H1 (cell line): ENCODE measurements at regions of chr6 and their contacts with region 1.

Region 1: GRCh38 chr6:152897799-152898399 is 84.9 kb downstream of the FBXO5 start:
- DNase-seq: peak; percentile 58 to 98
- H3K4me3 ChIP-seq: no peak overlapping the region
- H3K27ac ChIP-seq: no peak overlapping the region
- H3K4me1 ChIP-seq: no peaks in the 10 kb centered on the region; a peak in 1 of 7 replicates
- H3K27me3 ChIP-seq: peaks cover 0 to 3% (median 0%) of the 10 kb centered on the region in 4 experiments; a peak in 3 of 7 replicates
- CTCF ChIP-seq: peak; percentile 78 to 98 (median 96)
- EP300 ChIP-seq: no peak
- POLR2A ChIP-seq: no peak
- RAD21 ChIP-seq: peak; percentile 42 to 66

Region 2: GRCh38 chr6:152576525-152576924 is 321.4 kb before region 1 on chr6:
- CTCF ChIA-PET with region 1: no interaction called
- POLR2A ChIA-PET with region 1: no interaction called
- DNase-seq: no peak
- H3K4me3 ChIP-seq: no peak overlapping the region
- H3K27ac ChIP-seq: no peak overlapping the region
- H3K4me1 ChIP-seq: no peaks in the 10 kb centered on the region; a peak in 1 of 7 replicates
- H3K27me3 ChIP-seq: no peaks in the 10 kb centered on the region
- CTCF ChIP-seq: no peak
- EP300 ChIP-seq: no peak
- POLR2A ChIP-seq: no peak
- RAD21 ChIP-seq: no peak

Region 3: DNA sequence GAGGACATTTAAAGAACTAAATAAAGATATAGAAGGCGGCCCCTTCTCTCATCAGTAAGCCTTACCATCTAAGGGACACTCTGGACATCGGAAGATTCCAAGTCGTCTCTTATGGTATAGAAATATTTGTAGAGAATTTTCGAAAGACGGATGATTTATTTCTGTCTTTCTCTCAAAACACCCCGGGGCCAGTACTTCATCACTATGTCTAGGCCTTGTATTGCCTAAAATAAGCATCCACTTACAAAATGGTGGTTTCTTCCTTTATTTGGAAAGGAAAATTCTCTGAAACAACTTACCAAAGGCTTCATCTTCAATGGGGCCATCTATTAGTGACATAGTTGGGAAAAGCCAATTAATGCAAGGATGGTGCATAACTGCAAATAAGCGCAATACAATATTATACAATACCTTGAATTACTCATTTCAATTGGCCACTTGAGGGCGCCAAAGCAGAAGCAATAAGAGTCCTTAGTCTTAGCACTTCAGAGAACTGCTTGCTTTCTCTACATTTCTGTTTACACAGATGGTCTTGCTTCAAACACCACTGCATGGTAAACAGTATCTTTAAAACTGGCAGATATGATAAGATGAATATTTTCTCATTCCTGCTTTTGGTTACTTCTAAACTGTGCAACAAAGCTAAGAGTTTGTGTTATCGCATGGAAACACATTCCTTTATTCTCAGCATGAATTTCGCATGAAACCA is 34.1 kb before region 1 on chr6:
- CTCF ChIA-PET with region 1: interaction called, 16 read pairs
- POLR2A ChIA-PET with region 1: no interaction called
- DNase-seq: peak in 1 of 2 experiments; percentile 65
- H3K4me3 ChIP-seq: no peak overlapping the region
- H3K27ac ChIP-seq: no peak overlapping the region
- H3K4me1 ChIP-seq: no peaks in the 10 kb centered on the region
- H3K27me3 ChIP-seq: no peaks in the 10 kb centered on the region
- CTCF ChIP-seq: peak in 2 of 3 experiments; percentile 67 to 72; a peak in 3 of 4 replicates
- EP300 ChIP-seq: no peak
- POLR2A ChIP-seq: no peak
- RAD21 ChIP-seq: peak; percentile 92 to 93

Region 4: GRCh38 chr6:152916035-152916434 is 18.1 kb after region 1 on chr6:
- CTCF ChIA-PET with region 1: interaction called, 42 read pairs
- POLR2A ChIA-PET with region 1: no interaction called
- DNase-seq: no peak
- H3K4me3 ChIP-seq: no peak overlapping the region
- H3K27ac ChIP-seq: no peak overlapping the region
- H3K4me1 ChIP-seq: no peaks in the 10 kb centered on the region; a peak in 1 of 7 replicates
- H3K27me3 ChIP-seq: no peaks in the 10 kb centered on the region
- CTCF ChIP-seq: no peak
- EP300 ChIP-seq: no peak
- POLR2A ChIP-seq: no peak
- RAD21 ChIP-seq: no peak

Region 5: DNA sequence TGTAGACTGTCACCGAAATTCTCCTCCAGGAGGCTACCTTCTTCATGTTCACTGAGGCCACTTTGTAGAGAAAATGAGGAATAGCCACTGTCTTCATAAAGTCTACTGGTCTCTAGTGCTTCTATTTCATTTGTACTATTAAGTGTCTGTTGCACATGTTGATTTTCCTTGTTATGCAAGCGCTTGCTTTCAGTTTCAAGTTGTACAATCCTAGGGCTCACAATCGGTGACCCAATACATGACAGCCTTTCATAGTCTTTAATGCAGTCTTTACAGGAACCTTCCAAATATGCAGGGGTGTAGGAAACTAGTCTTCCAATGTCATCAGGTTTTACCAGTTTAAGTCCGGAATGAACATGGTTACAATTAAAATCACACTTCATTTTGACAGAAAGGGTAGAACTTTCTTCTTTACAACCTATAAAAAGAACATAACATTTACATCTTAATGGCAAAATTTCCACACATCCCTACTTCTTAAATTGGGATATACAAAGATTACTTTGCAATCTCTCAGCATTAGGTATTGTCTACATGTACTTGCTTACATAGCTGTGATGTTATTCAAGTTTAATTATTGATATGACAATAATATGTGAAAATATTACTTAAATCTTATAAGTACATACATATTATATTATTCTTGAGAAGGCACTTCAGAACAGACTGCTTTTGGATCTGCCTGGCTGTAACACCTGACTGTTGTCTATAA is 77.5 kb after region 1 on chr6:
- CTCF ChIA-PET with region 1: no interaction called
- POLR2A ChIA-PET with region 1: no interaction called
- DNase-seq: no peak
- H3K4me3 ChIP-seq: no peak overlapping the region
- H3K27ac ChIP-seq: no peak overlapping the region
- H3K4me1 ChIP-seq: peaks cover 0 to 8% (median 3%) of the 10 kb centered on the region in 4 experiments; a peak in 4 of 7 replicates
- H3K27me3 ChIP-seq: no peaks in the 10 kb centered on the region
- CTCF ChIP-seq: no peak
- EP300 ChIP-seq: no peak
- POLR2A ChIP-seq: no peak
- RAD21 ChIP-seq: no peak